ENCODE measurements at regions of chr9 and their contacts with region 1.

Region 1: DNA sequence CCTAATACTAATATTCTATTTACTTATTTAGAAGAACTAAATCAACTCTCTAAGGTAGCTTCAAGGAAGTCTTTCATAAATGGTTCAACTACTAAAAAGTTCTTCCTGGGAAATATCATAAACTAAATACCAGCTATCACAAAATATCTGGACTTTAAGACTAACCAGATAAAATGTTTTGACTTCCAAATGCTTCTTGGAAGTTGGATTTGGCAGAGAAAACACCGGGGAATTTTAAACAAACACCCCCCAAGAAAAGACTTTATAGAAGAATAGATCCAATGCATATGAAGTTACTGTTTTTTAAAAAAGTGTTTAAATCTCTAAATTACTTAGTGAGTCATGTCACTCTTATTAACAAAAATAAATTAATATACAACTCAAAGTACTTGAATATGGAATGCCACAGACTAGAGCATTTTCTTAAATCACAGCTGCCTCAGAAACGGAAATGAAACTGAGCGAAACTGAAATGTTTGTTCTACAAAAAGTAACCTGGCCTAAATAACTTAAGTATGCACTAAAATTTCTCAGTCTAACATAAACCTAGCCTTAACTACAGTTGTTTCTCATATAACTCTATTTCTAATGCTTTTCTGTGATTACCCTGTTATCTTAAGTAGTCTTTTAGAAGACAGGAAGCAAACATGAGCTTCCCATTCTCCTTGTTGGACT is 6.8 kb downstream of the ABCA1 start:
- DNase-seq: peak; percentile 65
- ATAC-seq: no peak
- H3K4me3 ChIP-seq: peak overlapping the region in 2 of 5 experiments; percentile 1 to 48
- H3K4me3 Mint-ChIP-seq: peak overlapping the region; percentile 46
- H3K27ac ChIP-seq: peak overlapping the region; percentile 54 to 60
- H3K27ac Mint-ChIP-seq: peak overlapping the region; percentile 81
- H3K4me1 ChIP-seq: peaks cover 78 to 81% of the 10 kb centered on the region in 2 donors
- H3K4me1 Mint-ChIP-seq: peaks cover 85% of the 10 kb centered on the region
- H3K27me3 ChIP-seq: no peaks in the 10 kb centered on the region
- H3K27me3 Mint-ChIP-seq: no peaks in the 10 kb centered on the region
- CTCF ChIP-seq: no peak

Region 2: DNA sequence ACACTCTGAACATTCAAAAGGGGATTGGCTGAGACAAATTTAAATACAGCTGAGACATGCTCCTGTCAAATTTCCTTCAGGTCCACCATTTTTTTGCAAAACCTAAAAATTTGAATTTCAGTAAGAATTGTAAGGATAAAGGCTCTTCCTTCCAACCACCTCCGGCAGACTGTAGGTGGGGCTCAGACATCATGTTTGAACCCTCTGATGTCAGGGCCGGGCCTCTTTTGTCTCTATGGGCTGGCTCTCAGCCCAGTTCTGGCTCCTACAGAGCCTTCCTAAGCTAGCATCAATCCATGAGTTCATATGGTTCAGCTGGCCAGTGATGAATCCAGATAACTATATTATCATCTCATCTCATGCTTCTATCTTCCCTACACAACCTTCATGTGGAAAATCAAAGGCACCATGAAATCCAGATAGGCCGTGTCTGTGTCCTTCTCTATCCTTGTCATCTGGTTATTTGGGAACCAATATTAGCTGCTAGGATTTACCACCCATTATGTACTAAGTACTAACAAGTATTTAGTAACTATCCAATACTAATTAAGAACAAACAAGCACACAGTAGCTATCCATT is 113.1 kb before region 1 on chr9:
- CTCF ChIA-PET with region 1: no interaction called
- POLR2A ChIA-PET with region 1: no interaction called
- intact Hi-C with region 1: no loop called
- DNase-seq: no peak
- ATAC-seq: no peak
- H3K4me3 ChIP-seq: no peak overlapping the region
- H3K4me3 Mint-ChIP-seq: no peak overlapping the region
- H3K27ac ChIP-seq: no peak overlapping the region
- H3K27ac Mint-ChIP-seq: no peak overlapping the region
- H3K4me1 ChIP-seq: no peaks in the 10 kb centered on the region
- H3K4me1 Mint-ChIP-seq: no peaks in the 10 kb centered on the region
- H3K27me3 ChIP-seq: no peaks in the 10 kb centered on the region
- H3K27me3 Mint-ChIP-seq: no peaks in the 10 kb centered on the region
- CTCF ChIP-seq: no peak

Region 3: GRCh38 chr9:104868687-104869404 is 52.4 kb before region 1 on chr9:
- CTCF ChIA-PET with region 1: interaction called, 33 read pairs
- POLR2A ChIA-PET with region 1: interaction called, 18 read pairs
- intact Hi-C with region 1: loop called (anchors 1 kb)
- DNase-seq: peak; percentile 83
- ATAC-seq: peak; percentile 88
- H3K4me3 ChIP-seq: peak overlapping the region in 1 of 5 experiments; percentile 2
- H3K4me3 Mint-ChIP-seq: peak overlapping the region; percentile 74
- H3K27ac ChIP-seq: peak overlapping the region; percentile 54 to 69
- H3K27ac Mint-ChIP-seq: peak overlapping the region; percentile 81
- H3K4me1 ChIP-seq: peaks cover 18 to 35% of the 10 kb centered on the region in 2 donors
- H3K4me1 Mint-ChIP-seq: peaks cover 39% of the 10 kb centered on the region
- H3K27me3 ChIP-seq: no peaks in the 10 kb centered on the region
- H3K27me3 Mint-ChIP-seq: no peaks in the 10 kb centered on the region
- CTCF ChIP-seq: no peak